ENCODE measurements at regions of chr15 and their contacts with region 1.

Region 1: DNA sequence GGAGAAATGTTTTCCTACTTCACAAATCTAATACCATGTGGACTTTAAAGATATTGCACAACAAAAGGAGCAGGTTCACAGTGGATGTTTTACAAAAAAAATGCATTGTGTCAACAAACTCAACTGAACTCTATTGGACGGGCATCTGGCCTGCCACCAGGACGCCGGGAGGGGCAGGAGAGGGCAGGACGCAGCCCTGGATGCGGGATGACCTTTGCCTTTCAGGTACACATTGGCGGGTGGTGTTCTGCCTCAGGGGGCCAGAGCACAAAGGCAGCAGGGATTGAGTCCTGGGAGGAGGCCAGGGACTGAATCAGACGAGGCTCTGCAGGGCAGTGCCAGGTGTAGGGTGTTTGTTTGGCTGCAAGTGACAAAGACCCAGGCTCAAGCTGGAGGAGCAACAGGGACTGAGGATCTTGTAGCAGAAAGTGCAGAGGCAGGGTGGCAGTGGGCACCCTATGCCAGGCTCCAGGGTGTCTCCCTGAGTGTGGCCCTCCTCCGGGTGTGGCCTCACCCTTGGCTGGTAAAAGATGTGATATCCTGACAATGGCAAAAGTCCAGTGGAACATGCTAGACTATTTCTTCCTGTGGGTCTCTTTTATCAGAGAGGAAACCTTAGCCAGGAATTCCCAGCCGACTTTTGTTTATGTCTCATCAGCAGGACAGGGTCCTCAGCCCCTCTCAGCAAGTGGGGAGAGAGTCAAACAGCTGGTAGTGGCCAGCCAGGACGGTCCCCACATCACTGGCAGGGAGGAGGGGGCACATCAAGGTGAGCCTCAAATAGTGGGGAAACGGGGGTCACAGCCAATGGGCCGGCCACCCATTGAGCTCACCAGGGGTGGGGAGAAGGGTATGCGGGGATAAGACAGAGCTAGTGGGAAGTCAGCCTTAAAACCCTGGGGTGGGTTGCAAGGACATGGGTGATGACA is 29.7 kb upstream of the KLF13 start:
- DNase-seq: peak; percentile 97
- ATAC-seq: peak; percentile 94
- H3K4me3 ChIP-seq: peak overlapping the region in 1 of 3 experiments; percentile 38; a peak in 3 of 6 replicates
- H3K27ac ChIP-seq: peak overlapping the region; percentile 81
- H3K4me1 ChIP-seq: peaks cover 95% of the 10 kb centered on the region
- H3K27me3 ChIP-seq: no peaks in the 10 kb centered on the region
- CTCF ChIP-seq: peak; percentile 41
- EP300 ChIP-seq: peak; percentile 78 to 91; a peak in 3 of 4 replicates
- POLR2A ChIP-seq: peak; percentile 45 to 50; a peak in 2 of 4 replicates
- RAD21 ChIP-seq: peak; percentile 57

Region 2: DNA sequence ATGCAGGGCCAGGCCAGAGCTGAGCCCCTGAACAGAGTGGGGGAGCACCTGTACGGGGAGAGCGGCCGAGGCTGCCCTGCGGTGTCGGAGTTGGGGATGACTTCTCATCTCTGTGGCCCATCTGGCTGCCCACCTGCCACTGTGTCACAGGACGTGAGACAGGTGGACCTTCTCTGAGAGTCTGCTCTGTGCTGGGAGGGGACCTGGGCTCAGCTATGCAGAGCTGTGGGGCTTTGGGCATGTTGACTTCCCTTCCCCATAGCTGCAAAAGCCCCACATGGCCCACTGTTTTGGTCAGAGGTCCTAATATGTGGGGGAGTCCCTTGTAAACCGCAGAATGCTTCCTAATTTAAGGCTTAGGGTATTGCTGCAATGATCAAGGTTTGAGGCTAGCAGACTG is 127.4 kb before region 1 on chr15:
- CTCF ChIA-PET with region 1: no interaction called
- POLR2A ChIA-PET with region 1: no interaction called
- in situ Hi-C with region 1: no loop called
- intact Hi-C with region 1: no loop called
- DNase-seq: no peak
- ATAC-seq: no peak
- H3K4me3 ChIP-seq: no peak overlapping the region
- H3K27ac ChIP-seq: no peak overlapping the region
- H3K4me1 ChIP-seq: peaks cover 1% of the 10 kb centered on the region; the same call in 1 of the 2 replicates
- H3K27me3 ChIP-seq: no peaks in the 10 kb centered on the region; a peak in 1 of 5 replicates
- CTCF ChIP-seq: no peak
- EP300 ChIP-seq: no peak
- POLR2A ChIP-seq: no peak
- RAD21 ChIP-seq: no peak

Region 3: GRCh38 chr15:31236184-31237042 is 60.5 kb before region 1 on chr15:
- CTCF ChIA-PET with region 1: no interaction called
- POLR2A ChIA-PET with region 1: interaction called, 6 read pairs
- in situ Hi-C with region 1: no loop called
- intact Hi-C with region 1: loop called (anchors 2 kb)
- DNase-seq: peak; percentile 64
- ATAC-seq: peak; percentile 92
- H3K4me3 ChIP-seq: peak overlapping the region; percentile 33 to 66 (median 55)
- H3K27ac ChIP-seq: no peak overlapping the region
- H3K4me1 ChIP-seq: peaks cover 21% of the 10 kb centered on the region
- H3K27me3 ChIP-seq: peaks cover 0 to 2% of the 10 kb centered on the region in 2 experiments; a peak in 1 of 5 replicates
- CTCF ChIP-seq: peak; percentile 11; the same call in 1 of the 2 replicates
- EP300 ChIP-seq: no peak
- POLR2A ChIP-seq: no peak
- RAD21 ChIP-seq: no peak

Region 4: GRCh38 chr15:31311735-31312619 is 15.1 kb after region 1 on chr15:
- CTCF ChIA-PET with region 1: no interaction called
- POLR2A ChIA-PET with region 1: no interaction called
- in situ Hi-C with region 1: no loop called
- intact Hi-C with region 1: no loop called
- DNase-seq: no peak
- ATAC-seq: peak; percentile 39
- H3K4me3 ChIP-seq: no peak overlapping the region
- H3K27ac ChIP-seq: no peak overlapping the region
- H3K4me1 ChIP-seq: peaks cover 13% of the 10 kb centered on the region
- H3K27me3 ChIP-seq: no peaks in the 10 kb centered on the region
- CTCF ChIP-seq: no peak
- EP300 ChIP-seq: no peak
- POLR2A ChIP-seq: no peak
- RAD21 ChIP-seq: no peak

Region 5: GRCh38 chr15:31326156-31326732 is 29.3 kb after region 1 on chr15:
- CTCF ChIA-PET with region 1: no interaction called
- POLR2A ChIA-PET with region 1: interaction called, 26 read pairs
- in situ Hi-C with region 1: no loop called
- intact Hi-C with region 1: loop called (anchors 1 kb)
- DNase-seq: peak; percentile 89
- ATAC-seq: peak; percentile 83
- H3K4me3 ChIP-seq: peak overlapping the region; percentile 79 to 90 (median 89)
- H3K27ac ChIP-seq: peak overlapping the region; percentile 82
- H3K4me1 ChIP-seq: peaks cover 47% of the 10 kb centered on the region
- H3K27me3 ChIP-seq: peaks cover 0 to 3% of the 10 kb centered on the region in 2 experiments; a peak in 1 of 5 replicates
- CTCF ChIP-seq: no peak; the same call in 1 of the 2 replicates
- EP300 ChIP-seq: no peak
- POLR2A ChIP-seq: 0 out of 4 replicates have a peak, but pooled peaks of 1 of the 2 experiments have one; percentile 35
- RAD21 ChIP-seq: peak; percentile 41; the same call in 1 of the 2 replicates

Measured in HepG2 (cell line).